HEK293 (cell line): ENCODE measurements at regions of chr12 and their contacts with region 1.

Region 1: GRCh38 chr12:27305673-27306456 is 26.8 kb upstream of the BMAL2 start:
- H3K4me3 ChIP-seq: no peak overlapping the region
- H3K27ac ChIP-seq: 0 out of 2 replicates have a peak overlapping the region, but pooled peaks have one; percentile 16
- H3K4me1 ChIP-seq: peaks cover 13% of the 10 kb centered on the region
- CTCF ChIP-seq: no peak

Region 2: GRCh38 chr12:27142101-27142721 is 163.7 kb before region 1 on chr12:
- CTCF ChIA-PET with region 1: interaction called, 10 read pairs
- POLR2A ChIA-PET with region 1: no interaction called
- H3K4me3 ChIP-seq: no peak overlapping the region
- H3K27ac ChIP-seq: no peak overlapping the region
- H3K4me1 ChIP-seq: no peaks in the 10 kb centered on the region
- CTCF ChIP-seq: peak; percentile 33; the same call in 1 of the 2 replicates

Region 3: GRCh38 chr12:27243804-27244683 is 61.8 kb before region 1 on chr12 and contains the start of gene STK38L:
- CTCF ChIA-PET with region 1: interaction called, 10 read pairs
- POLR2A ChIA-PET with region 1: interaction called, 6 read pairs
- H3K4me3 ChIP-seq: peak within 1 kb of the TSS; percentile 89
- H3K27ac ChIP-seq: peak within 1 kb of the TSS; percentile 71
- H3K4me1 ChIP-seq: peaks cover 16% of the 10 kb centered on the region
- CTCF ChIP-seq: peak; percentile 82

Region 4: GRCh38 chr12:27284751-27285150 is 21.1 kb before region 1 on chr12:
- CTCF ChIA-PET with region 1: interaction called, 10 read pairs
- POLR2A ChIA-PET with region 1: no interaction called
- H3K4me3 ChIP-seq: no peak overlapping the region
- H3K27ac ChIP-seq: no peak overlapping the region
- H3K4me1 ChIP-seq: peaks cover 26% of the 10 kb centered on the region
- CTCF ChIP-seq: no peak